Breast epithelium (tissue), 4 donors: ENCODE measurements at regions of chr12 and their contacts with region 1.

Region 1: GRCh38 chr12:123388177-123388947 is 4.4 kb downstream of the KMT5A start:
- DNase-seq: peak; percentile 69 to 71
- H3K4me3 ChIP-seq: peak overlapping the region; percentile 43 to 77 (median 71)
- H3K27ac ChIP-seq: peak overlapping the region; percentile 82 to 95
- H3K4me1 ChIP-seq: peaks cover 6 to 9% of the 10 kb centered on the region in 2 donors
- H3K27me3 ChIP-seq: no peaks in the 10 kb centered on the region
- CTCF ChIP-seq: no peak
- POLR2A ChIP-seq: no peak

Region 2: DNA sequence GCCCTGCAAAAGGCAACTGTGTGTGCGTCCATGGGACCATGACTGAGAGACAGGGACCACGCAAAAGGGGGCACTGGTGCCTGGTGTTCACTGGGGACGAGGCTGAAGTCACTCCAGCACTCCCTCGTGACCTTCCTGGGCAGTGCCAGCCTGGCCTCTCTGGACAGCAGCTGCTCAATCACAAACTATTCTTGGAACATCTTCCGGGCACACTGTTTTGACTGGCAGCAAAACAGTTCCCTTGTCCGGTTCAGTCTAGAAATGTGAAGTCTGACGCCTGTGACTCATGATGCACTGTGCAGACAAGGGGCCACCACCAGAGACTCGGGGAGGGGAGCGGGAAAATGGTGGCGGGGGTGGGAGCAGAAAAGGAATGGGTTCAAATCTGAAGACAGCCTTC is 90.4 kb after region 1 on chr12:
- intact Hi-C with region 1: loop called (anchors 10 kb)
- DNase-seq: no peak
- H3K4me3 ChIP-seq: no peak overlapping the region
- H3K27ac ChIP-seq: peak overlapping the region in 1 of 2 donors; percentile 55
- H3K4me1 ChIP-seq: no peaks in the 10 kb centered on the region
- H3K27me3 ChIP-seq: no peaks in the 10 kb centered on the region
- CTCF ChIP-seq: no peak
- POLR2A ChIP-seq: no peak